Keratinocyte (primary cell): ENCODE measurements at regions of chr3 and their contacts with region 1.

Region 1: DNA sequence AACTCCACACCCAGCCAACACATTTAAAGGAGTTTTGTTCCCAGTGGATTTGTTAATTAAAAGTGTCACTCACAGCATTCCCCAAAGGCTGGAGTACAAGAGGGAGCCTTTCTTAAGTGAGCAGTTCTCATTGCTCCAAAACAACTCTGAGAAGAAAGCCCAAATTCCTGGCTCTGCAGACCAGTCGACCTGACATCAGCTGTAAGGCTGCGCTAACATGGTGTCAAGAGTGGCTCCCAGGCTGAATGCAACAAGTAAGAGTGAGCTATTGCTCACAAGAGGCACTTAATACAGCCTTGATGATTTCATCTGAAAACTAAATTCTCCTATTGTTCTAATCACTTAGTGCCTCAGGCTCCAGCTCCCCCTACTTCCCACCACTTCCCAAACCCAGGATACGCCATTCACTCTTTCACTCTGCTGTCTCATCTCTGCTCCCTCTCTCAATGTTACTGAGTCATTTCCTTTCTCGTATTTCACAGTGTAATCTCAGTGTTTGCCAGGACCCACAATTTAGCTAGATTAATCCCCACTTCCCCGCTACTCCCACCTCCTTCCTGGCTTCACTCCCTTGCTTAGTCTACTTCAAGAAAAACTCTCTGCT is 81.8 kb downstream of the WWTR1 start:
- DNase-seq: peak; percentile 76
- H3K4me3 ChIP-seq: peak overlapping the region in 2 of 3 experiments; percentile 20 to 32
- H3K27ac ChIP-seq: peak overlapping the region; percentile 95
- H3K4me1 ChIP-seq: peaks cover 90% of the 10 kb centered on the region
- H3K27me3 ChIP-seq: no peaks in the 10 kb centered on the region
- CTCF ChIP-seq: no peak

Region 2: DNA sequence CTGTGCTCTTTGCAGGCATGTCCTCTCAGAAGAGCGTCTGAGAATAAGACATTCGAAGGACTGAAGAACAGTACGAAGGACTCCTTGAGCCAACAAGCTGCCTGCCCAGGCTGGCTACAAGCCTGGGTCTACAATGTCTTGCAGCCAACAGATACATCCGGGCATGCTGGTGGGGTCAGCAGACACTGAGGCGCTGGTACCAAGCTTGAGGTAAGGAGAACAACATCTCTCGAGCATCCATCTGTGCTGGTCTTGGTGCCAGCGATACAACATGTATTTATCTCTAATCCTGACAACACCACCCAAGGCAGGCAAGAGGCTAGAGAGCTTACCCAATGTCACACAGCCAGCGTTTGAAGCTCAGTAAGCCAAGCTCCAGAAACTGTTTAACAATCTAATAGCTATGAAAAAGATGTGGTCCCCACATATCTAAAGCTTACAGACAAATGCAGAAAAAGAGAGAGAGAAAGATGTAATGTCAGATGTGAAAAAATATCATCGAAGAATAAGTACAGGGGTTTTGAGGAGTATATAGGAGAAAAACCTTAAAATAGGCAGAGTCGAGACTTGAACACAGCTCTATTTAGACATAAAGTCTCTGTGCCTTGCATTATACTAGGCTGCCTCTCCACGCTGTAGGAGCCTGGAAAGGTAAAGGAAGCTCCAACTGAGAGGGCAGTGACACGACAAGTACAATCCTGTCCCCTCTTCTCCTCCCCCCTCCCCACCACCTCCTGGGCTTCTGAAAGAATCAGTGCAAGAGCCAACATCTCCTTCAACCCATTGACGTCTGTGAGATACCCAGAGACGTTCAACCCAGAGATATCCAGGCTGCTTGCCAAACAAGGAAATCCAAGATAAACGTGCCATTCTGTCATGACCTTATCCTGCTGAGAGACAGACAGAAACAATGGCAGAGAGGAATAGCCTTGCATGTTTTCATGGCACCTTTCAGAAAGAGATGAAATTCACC is 42.4 kb after region 1 on chr3:
- dilution Hi-C with region 1: loop called (anchors 5 kb)
- DNase-seq: peak; percentile 38
- H3K4me3 ChIP-seq: peak overlapping the region in 2 of 3 experiments; percentile 18 to 34
- H3K27ac ChIP-seq: peak overlapping the region; percentile 60
- H3K4me1 ChIP-seq: peaks cover 43% of the 10 kb centered on the region
- H3K27me3 ChIP-seq: no peaks in the 10 kb centered on the region
- CTCF ChIP-seq: no peak